ENCODE measurements at regions of chrX and their contacts with region 1.

Region 1: GRCh38 chrX:134969726-134970125 is 21.1 kb upstream of the SMIM10 start:
- DNase-seq: no peak
- ATAC-seq: peak; percentile 87

Region 2: GRCh38 chrX:134932528-134933217 is 37.1 kb before region 1 on chrX:
- intact Hi-C with region 1: loop called (anchors 1 kb)
- DNase-seq: no peak
- ATAC-seq: no peak

Region 3: GRCh38 chrX:135009838-135010237 is 40.1 kb after region 1 on chrX:
- intact Hi-C with region 1: no loop called
- DNase-seq: no peak
- ATAC-seq: no peak

Region 4: DNA sequence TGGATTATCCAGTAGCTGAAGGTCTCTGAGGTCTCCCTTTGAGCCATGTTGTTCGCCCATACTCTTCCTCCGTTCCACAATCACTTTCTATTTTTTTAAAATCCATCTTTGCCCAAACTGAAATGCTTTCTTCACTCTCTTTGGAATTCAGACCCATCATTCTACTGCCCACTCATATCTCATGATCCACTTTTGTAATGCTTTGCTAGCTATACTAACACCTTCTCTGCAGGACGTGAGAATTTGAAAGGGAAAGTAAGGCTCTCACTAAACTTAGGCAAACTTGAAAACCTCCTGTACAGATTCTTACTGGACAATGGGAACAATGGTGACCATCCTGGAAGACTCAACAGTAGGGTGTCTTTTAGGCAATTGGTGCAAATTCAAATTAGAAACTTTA is 91.0 kb after region 1 on chrX:
- intact Hi-C with region 1: no loop called
- DNase-seq: no peak
- ATAC-seq: no peak